CD4-positive, alpha-beta T cell (primary cell): ENCODE measurements at regions of chr9 and their contacts with region 1.

Region 1: DNA sequence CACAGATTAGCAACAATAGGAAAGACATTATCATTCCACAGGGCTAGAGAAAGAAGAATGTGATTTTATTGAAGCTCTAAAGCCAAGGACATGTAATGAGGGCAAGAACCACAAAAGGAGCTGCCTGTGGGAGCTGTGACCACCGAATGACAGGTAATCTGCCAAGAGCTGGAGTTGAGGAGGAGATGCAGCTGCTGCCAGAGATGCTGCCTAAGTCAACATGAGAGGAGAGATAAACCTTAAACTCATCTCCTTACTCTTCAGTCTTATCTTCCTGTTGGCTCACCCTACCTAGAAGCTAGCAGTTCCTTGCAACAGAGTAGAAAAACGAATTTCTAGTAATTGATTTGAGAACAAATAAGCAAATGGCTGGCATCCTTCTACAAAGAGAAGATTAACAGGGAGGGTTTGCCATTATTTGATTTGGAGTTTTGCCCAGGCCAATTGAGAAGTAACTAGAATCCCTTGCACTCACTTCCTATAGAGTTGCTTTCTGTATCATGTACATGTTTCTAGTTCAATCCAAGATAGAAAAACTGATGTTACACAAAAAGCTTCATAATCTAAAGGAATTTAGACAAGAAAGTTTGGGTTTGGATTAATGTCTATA is 539.2 kb downstream of the TLE1 start:
- DNase-seq: no peak
- ATAC-seq: no peak
- H3K4me3 ChIP-seq: no peak overlapping the region
- H3K4me3 Mint-ChIP-seq: no peak overlapping the region
- H3K27ac ChIP-seq: no peak overlapping the region
- H3K27ac Mint-ChIP-seq: no peak overlapping the region
- H3K4me1 ChIP-seq: no peaks in the 10 kb centered on the region
- H3K4me1 Mint-ChIP-seq: no peaks in the 10 kb centered on the region
- H3K27me3 ChIP-seq: no peaks in the 10 kb centered on the region
- H3K27me3 Mint-ChIP-seq: no peaks in the 10 kb centered on the region
- CTCF ChIP-seq: no peak

Region 2: DNA sequence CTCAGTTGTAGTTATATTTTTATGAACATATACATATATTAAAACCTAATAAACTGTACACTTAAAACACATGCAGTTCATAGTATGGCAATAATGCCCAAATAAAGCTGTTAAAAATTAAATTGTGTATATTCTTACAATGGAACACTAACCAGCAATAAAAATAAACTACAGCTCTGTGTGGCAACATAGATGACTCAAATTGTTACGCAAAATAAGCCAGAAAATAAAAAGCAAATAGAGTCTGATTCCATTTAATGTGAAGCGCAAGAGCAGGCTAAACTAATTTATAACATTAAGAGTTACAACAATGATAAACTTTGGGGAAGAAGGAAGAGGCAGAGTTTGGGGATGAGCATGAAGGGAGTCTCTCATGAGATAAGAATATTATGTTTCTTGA is 58.1 kb before region 1 on chr9:
- CTCF ChIA-PET with region 1: no interaction called
- POLR2A ChIA-PET with region 1: no interaction called
- intact Hi-C with region 1: loop called in 1 of 2 experiments (anchors 10 kb)
- DNase-seq: no peak
- ATAC-seq: no peak
- H3K4me3 ChIP-seq: no peak overlapping the region
- H3K4me3 Mint-ChIP-seq: no peak overlapping the region
- H3K27ac ChIP-seq: no peak overlapping the region
- H3K27ac Mint-ChIP-seq: no peak overlapping the region
- H3K4me1 ChIP-seq: no peaks in the 10 kb centered on the region
- H3K4me1 Mint-ChIP-seq: no peaks in the 10 kb centered on the region
- H3K27me3 ChIP-seq: no peaks in the 10 kb centered on the region
- H3K27me3 Mint-ChIP-seq: no peaks in the 10 kb centered on the region
- CTCF ChIP-seq: no peak

Region 3: DNA sequence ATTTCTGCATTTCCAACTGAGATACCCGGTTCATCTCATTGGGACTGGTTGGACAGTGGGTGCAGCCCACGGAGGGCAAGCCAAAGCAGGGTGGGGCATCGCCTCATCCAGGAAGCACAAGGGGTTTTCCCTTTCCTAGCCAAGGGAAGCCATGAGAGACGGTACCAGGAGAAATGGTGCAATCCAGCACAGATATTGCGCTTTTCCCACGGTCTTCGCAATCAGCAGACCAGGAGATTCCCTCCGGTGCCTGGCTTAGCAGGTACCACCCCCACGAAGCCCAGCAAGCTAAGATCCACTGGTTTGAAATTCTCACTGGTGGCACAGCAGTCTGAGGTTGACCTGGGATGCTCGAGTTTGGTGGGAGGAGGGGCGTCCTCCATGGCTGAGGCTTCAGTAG is 12.2 kb after region 1 on chr9:
- CTCF ChIA-PET with region 1: no interaction called
- POLR2A ChIA-PET with region 1: no interaction called
- intact Hi-C with region 1: no loop called
- DNase-seq: no peak
- ATAC-seq: no peak
- H3K4me3 ChIP-seq: no peak overlapping the region
- H3K4me3 Mint-ChIP-seq: no peak overlapping the region
- H3K27ac ChIP-seq: no peak overlapping the region
- H3K27ac Mint-ChIP-seq: no peak overlapping the region
- H3K4me1 ChIP-seq: no peaks in the 10 kb centered on the region
- H3K4me1 Mint-ChIP-seq: no peaks in the 10 kb centered on the region
- H3K27me3 ChIP-seq: no peaks in the 10 kb centered on the region
- H3K27me3 Mint-ChIP-seq: no peaks in the 10 kb centered on the region
- CTCF ChIP-seq: no peak